AG04449 (cell line): ENCODE measurements at regions of chr16 and their contacts with region 1.

Region 1: GRCh38 chr16:86823895-86824671 is 245.7 kb downstream of the FOXL1 start:
- DNase-seq: peak; percentile 65
- H3K4me3 ChIP-seq: no peak overlapping the region
- CTCF ChIP-seq: no peak

Region 2: DNA sequence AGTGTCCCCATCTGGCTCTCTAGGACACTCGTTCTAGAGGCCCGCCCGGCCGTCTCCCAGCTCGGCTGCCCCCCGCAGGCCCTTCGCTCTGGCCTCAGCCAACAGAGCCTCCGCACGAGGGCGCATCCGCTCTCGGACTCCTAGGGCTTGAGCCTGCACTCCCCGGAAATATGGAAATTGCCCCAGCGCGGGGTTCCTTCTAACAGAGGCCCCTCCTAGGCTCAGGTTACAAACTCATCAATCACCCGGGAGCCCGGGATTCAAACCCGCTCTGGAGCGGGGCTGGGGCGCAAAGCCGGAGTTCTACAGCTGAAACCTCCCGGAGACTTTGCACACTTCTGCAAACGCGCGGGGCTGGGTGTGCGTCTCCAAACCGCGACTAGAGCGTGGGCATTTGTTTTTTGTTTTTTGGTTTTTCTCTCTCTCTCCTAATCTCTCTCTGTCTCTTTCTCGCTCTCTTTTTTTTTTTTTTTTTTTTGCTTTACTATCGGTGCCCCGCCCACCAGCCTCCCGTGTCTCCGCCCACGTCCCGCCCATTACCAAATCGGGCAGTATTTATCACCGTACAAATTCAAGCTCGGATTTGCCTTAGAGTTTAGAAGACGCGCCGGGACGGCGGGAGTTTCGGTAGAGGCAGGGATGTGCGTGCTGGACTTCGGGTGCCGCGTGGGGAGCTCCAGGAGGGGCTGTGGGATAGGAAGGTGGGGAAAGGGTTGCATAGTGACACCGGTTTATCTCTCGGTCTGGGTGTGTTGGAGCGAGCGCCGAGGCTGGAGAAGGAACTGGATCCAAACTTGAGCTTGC is 248.1 kb before region 1 on chr16:
- CTCF ChIA-PET with region 1: no interaction called
- POLR2A ChIA-PET with region 1: no interaction called
- DNase-seq: no peak
- H3K4me3 ChIP-seq: peak overlapping the region; percentile 73
- CTCF ChIP-seq: peak; percentile 82

Region 3: DNA sequence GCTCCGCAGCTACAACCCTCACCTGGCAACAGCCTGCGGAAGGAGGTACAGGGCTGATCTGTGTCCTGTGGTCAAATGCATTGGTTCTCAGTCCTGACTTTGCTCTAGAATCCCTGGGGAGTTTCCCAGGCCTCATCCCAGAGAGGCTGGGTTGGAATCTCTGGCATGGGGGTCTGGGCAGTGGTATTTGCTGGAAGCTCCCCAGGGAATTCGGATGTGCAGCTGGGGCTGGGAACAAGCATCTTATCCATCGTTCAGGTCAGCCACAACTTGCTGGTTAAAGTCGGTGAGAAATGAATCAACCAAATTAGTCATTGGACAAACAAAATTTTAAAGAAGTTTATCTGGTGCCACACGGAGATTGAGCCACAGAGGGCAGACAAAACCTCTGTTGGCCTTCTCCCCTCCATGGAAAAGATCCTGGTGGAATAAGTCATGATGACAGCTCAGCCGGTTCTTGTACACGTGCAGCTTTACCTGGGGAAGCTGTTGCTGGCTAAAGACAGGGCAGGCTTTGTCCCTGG is 14.6 kb before region 1 on chr16:
- CTCF ChIA-PET with region 1: interaction called, 21 read pairs
- POLR2A ChIA-PET with region 1: no interaction called
- DNase-seq: peak; percentile 90
- H3K4me3 ChIP-seq: no peak overlapping the region
- CTCF ChIP-seq: peak; percentile 25

Region 4: GRCh38 chr16:86834451-86835035 is 10.5 kb after region 1 on chr16:
- CTCF ChIA-PET with region 1: interaction called, 11 read pairs
- POLR2A ChIA-PET with region 1: no interaction called
- DNase-seq: peak; percentile 71
- H3K4me3 ChIP-seq: no peak overlapping the region
- CTCF ChIP-seq: peak; percentile 54